ENCODE measurements at regions of chr15 and their contacts with region 1.

Region 1: DNA sequence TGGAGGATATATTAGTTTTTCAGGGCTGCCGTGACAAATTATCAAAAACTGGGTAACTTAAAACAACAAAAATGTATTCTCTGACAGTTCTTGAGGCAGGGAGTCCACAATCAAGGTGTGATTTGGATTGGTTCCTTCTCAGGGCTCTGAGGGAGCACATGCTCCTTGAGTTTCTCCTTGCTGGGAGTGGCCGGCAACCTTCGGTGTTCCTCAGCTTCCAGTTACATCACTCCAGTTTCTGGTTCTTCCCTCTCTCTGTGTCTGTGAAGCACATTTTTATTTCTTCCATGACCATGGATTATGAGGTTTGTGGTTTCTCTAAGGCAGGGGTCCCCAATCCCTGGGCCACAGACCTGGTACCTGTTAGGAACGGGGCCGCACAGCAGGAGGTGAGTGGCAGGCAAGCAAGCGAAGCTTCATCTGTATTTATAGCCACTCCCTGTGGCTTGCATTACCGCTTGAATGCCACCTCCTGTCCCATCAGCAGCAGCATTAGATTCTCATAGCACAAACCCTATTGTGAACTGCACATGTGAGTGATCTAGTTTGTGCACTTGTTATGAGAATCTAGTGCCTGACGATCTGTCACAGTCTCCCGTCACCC is 24.3 kb downstream of the LRRC28 start:
- DNase-seq: no peak
- ATAC-seq: peak in 2 of 4 donors; percentile 26 to 35
- H3K4me3 ChIP-seq: no peak overlapping the region
- H3K27ac ChIP-seq: no peak overlapping the region
- H3K4me1 ChIP-seq: no peaks in the 10 kb centered on the region
- H3K27me3 ChIP-seq: no peaks in the 10 kb centered on the region
- CTCF ChIP-seq: no peak

Region 2: GRCh38 chr15:99155961-99156450 is 119.6 kb before region 1 on chr15:
- intact Hi-C with region 1: no loop called
- DNase-seq: no peak
- ATAC-seq: peak in 3 of 4 donors; percentile 27 to 71 (median 32)
- H3K4me3 ChIP-seq: no peak overlapping the region
- H3K27ac ChIP-seq: no peak overlapping the region
- H3K4me1 ChIP-seq: no peaks in the 10 kb centered on the region
- H3K27me3 ChIP-seq: no peaks in the 10 kb centered on the region
- CTCF ChIP-seq: no peak

Region 3: GRCh38 chr15:99755692-99756409 is 480.2 kb after region 1 on chr15:
- intact Hi-C with region 1: loop called (anchors 5 kb)
- DNase-seq: peak; percentile 35 to 66
- ATAC-seq: peak; percentile 82 to 95 (median 86)
- H3K4me3 ChIP-seq: no peak overlapping the region
- H3K27ac ChIP-seq: no peak overlapping the region
- H3K4me1 ChIP-seq: no peaks in the 10 kb centered on the region
- H3K27me3 ChIP-seq: no peaks in the 10 kb centered on the region
- CTCF ChIP-seq: peak; percentile 84

Region 4: GRCh38 chr15:100043015-100043641 is 767.5 kb after region 1 on chr15:
- intact Hi-C with region 1: loop called in 1 of 2 experiments (anchors 10 kb)
- DNase-seq: peak; percentile 40 to 78
- ATAC-seq: peak; percentile 73 to 95 (median 78)
- H3K4me3 ChIP-seq: peak overlapping the region; percentile 43
- H3K27ac ChIP-seq: peak overlapping the region; percentile 70
- H3K4me1 ChIP-seq: peaks cover 19% of the 10 kb centered on the region
- H3K27me3 ChIP-seq: no peaks in the 10 kb centered on the region
- CTCF ChIP-seq: no peak